B cell (primary cell): ENCODE measurements at regions of chr12 and their contacts with region 1.

Region 1: GRCh38 chr12:121579981-121580868 is 598 bp downstream of the KDM2B start:
- DNase-seq: peak; percentile 79
- ATAC-seq: peak; percentile 55
- H3K4me3 ChIP-seq: peak overlapping the region; percentile 57 to 93 (median 65)
- H3K4me3 Mint-ChIP-seq: peak overlapping the region; percentile 94
- H3K27ac ChIP-seq: peak overlapping the region; percentile 69 to 77
- H3K27ac Mint-ChIP-seq: peak overlapping the region; percentile 94
- H3K4me1 ChIP-seq: peaks cover 23 to 47% of the 10 kb centered on the region in 2 donors
- H3K4me1 Mint-ChIP-seq: peaks cover 34% of the 10 kb centered on the region
- H3K27me3 ChIP-seq: no peaks in the 10 kb centered on the region
- H3K27me3 Mint-ChIP-seq: no peaks in the 10 kb centered on the region
- CTCF ChIP-seq: no peak

Region 2: DNA sequence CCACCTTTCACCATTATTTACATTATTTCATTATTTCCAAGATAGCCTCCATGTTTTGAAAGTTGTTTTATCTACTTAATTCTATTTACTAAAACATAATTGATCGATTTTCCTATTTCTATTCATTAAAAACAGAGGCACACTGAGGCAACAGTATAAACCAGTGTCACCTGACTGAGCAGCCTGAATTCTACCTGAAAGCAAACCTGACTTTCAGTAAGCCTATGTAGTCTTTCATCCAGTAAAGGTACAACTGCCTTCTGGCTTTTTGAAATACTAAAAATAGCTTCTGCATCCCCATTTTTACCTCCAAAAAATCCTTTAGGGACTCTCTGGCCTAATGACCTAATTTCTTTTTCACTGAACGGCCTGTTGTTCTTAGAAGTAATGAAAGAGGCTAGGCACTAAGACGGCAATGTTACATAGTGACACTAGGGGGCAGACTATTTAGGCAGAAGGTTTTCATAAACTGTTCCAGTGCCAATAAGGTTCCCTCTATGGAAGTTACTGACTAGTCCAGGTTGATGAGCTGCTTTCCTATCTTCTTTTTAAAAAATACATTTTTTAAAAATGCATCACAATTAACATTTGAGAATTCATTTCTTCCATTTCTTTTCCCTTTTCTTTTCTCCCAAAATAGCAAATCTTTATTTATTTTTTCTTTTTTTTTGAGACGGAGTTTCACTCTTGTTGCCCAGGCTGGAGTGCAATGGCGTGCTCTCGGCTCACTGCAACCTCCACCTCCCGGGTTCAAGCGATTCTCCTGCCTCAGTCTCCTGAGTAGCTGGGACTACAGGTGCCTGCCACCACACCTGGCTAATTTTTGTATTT is 245.5 kb before region 1 on chr12:
- CTCF ChIA-PET with region 1: no interaction called
- POLR2A ChIA-PET with region 1: no interaction called
- intact Hi-C with region 1: no loop called
- DNase-seq: peak; percentile 70
- ATAC-seq: peak; percentile 73
- H3K4me3 ChIP-seq: no peak overlapping the region
- H3K4me3 Mint-ChIP-seq: no peak overlapping the region
- H3K27ac ChIP-seq: no peak overlapping the region
- H3K27ac Mint-ChIP-seq: no peak overlapping the region
- H3K4me1 ChIP-seq: no peaks in the 10 kb centered on the region
- H3K4me1 Mint-ChIP-seq: peaks cover 3% of the 10 kb centered on the region
- H3K27me3 ChIP-seq: no peaks in the 10 kb centered on the region
- H3K27me3 Mint-ChIP-seq: no peaks in the 10 kb centered on the region
- CTCF ChIP-seq: peak; percentile 92

Region 3: DNA sequence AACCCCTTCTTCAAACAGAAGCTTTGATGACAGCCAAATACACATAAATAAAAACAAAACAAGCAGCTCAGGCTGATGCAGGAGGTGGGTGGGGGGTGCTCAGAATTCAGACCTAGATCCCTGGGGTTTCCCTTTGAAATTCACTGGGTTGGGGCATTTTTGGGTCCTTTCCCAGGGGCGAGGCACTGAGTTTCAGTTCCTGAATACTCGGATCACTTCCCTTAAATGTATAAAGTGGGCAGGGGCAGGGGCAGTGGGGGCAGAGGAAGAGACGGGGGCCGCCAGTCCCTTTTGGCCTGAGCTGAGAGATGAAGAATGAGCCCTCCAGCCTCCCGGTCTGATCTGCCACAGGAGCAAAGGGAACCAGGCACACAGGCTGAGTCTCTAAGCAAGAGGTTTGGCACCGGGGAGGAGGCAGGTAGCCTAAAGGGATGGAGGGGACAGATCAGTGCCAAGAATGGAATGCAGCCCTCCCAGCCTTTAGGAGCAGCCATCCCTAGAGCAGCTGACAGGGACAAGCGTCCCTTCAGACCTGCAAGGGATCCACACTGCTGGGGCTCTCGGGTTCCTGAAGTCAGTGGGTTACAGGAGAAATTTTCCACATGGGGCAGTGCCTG is 19.7 kb before region 1 on chr12:
- CTCF ChIA-PET with region 1: interaction called, 19 read pairs
- POLR2A ChIA-PET with region 1: interaction called, 6 read pairs
- intact Hi-C with region 1: no loop called
- DNase-seq: peak; percentile 90
- ATAC-seq: peak; percentile 78
- H3K4me3 ChIP-seq: no peak overlapping the region
- H3K4me3 Mint-ChIP-seq: peak overlapping the region; percentile 53
- H3K27ac ChIP-seq: peak overlapping the region; percentile 58
- H3K27ac Mint-ChIP-seq: peak overlapping the region; percentile 91
- H3K4me1 ChIP-seq: peaks cover 29 to 48% of the 10 kb centered on the region in 2 donors
- H3K4me1 Mint-ChIP-seq: peaks cover 40% of the 10 kb centered on the region
- H3K27me3 ChIP-seq: no peaks in the 10 kb centered on the region
- H3K27me3 Mint-ChIP-seq: no peaks in the 10 kb centered on the region
- CTCF ChIP-seq: no peak

Region 4: DNA sequence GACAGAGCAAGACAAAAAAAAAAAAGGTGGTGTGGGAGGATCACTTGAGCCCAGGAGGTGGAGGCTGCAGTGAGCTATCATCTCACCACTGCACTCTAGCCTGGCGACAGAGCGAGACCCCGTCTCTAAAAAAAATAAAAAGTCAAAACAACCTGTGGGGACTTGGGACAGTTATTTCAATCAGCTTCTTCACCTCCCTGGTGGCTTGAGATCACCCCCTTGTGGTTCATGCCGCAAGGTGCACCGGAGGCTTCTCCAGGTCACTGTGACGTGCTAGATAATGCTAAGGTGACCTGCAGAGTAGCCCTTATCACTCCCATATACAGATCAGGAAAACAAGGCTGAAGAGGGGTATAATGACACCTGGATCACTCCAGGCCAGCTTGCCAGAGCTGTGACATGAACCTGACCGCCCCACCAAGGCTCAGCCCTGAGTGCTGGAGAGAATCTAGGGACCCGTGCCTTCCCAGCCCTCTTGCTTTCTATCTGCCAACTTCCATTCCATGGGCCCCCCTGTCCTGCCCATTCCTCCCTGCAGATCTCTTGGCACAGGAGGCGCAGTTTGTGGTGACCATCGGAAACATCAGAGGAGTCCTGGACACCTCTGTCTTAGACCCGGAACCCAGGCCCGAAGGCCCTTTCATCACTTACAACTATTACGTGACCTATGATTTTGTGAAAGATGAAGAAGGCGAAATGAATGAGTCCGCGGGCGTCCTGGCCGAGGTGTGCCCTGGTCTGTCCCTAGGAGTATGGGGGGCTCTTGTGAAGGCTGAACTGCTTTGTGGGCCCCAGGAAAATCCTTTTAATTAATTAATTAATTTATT is 610.8 kb after region 1 on chr12:
- CTCF ChIA-PET with region 1: no interaction called
- POLR2A ChIA-PET with region 1: no interaction called
- intact Hi-C with region 1: no loop called
- DNase-seq: peak; percentile 72
- ATAC-seq: peak; percentile 95
- H3K4me3 ChIP-seq: no peak overlapping the region
- H3K4me3 Mint-ChIP-seq: no peak overlapping the region
- H3K27ac ChIP-seq: no peak overlapping the region
- H3K27ac Mint-ChIP-seq: no peak overlapping the region
- H3K4me1 ChIP-seq: no peaks in the 10 kb centered on the region
- H3K4me1 Mint-ChIP-seq: peaks cover 2% of the 10 kb centered on the region
- H3K27me3 ChIP-seq: peaks cover 0 to 4% (median 0%) of the 10 kb centered on the region in 4 experiments
- H3K27me3 Mint-ChIP-seq: peaks cover 16% of the 10 kb centered on the region
- CTCF ChIP-seq: peak; percentile 75